Activated naive CD4-positive, alpha-beta T cell treated with anti-CD3 and anti-CD28 coated beads for 36 hours (primary cell): ENCODE measurements at regions of chr21 and their contacts with region 1.

Region 1: GRCh38 chr21:43916691-43917514 is 51.9 kb downstream of the AGPAT3 start:
- DNase-seq: peak; percentile 77
- H3K4me3 Mint-ChIP-seq: peak overlapping the region; percentile 74
- H3K27ac Mint-ChIP-seq: peak overlapping the region; percentile 35
- H3K4me1 Mint-ChIP-seq: peaks cover 54% of the 10 kb centered on the region
- H3K27me3 Mint-ChIP-seq: no peaks in the 10 kb centered on the region

Region 2: DNA sequence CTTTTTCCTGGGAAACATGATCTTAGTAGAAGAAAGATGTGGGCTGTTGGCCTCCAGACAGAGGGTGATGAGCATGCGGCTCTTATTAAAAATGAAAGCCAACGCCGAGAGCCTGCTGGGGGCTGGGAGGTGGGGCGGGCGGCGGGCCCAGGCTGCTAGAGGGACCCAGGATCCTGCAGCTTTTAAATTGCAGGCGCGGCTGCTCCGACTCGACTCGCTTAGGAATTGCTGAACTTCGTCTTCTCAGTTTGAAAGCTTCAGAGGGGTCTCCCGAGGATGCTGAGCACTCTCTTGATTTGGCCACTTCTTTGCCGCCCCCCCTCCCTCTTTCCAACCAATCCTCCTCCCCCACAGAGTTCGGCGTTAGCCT is 50.7 kb before region 1 on chr21:
- CTCF ChIA-PET with region 1: interaction called, 5 read pairs
- intact Hi-C with region 1: loop called (anchors 2 kb)
- DNase-seq: peak; percentile 75
- H3K4me3 Mint-ChIP-seq: peak overlapping the region; percentile 75
- H3K27ac Mint-ChIP-seq: peak overlapping the region; percentile 89
- H3K4me1 Mint-ChIP-seq: peaks cover 46% of the 10 kb centered on the region
- H3K27me3 Mint-ChIP-seq: no peaks in the 10 kb centered on the region

Region 3: GRCh38 chr21:43884012-43884860 is 32.7 kb before region 1 on chr21:
- CTCF ChIA-PET with region 1: no interaction called
- intact Hi-C with region 1: loop called (anchors 5 kb)
- DNase-seq: peak; percentile 63
- H3K4me3 Mint-ChIP-seq: no peak overlapping the region
- H3K27ac Mint-ChIP-seq: peak overlapping the region; percentile 60
- H3K4me1 Mint-ChIP-seq: peaks cover 73% of the 10 kb centered on the region
- H3K27me3 Mint-ChIP-seq: no peaks in the 10 kb centered on the region

Region 4: GRCh38 chr21:44566403-44566802 is 649.5 kb after region 1 on chr21:
- CTCF ChIA-PET with region 1: no interaction called
- intact Hi-C with region 1: no loop called
- DNase-seq: no peak
- H3K4me3 Mint-ChIP-seq: no peak overlapping the region
- H3K27ac Mint-ChIP-seq: no peak overlapping the region
- H3K4me1 Mint-ChIP-seq: peaks cover 9% of the 10 kb centered on the region
- H3K27me3 Mint-ChIP-seq: no peaks in the 10 kb centered on the region